Spleen (tissue), 13 donors: ENCODE measurements at regions of chr17 and their contacts with region 1.

Region 1: GRCh38 chr17:43940630-43941029 is 1.6 kb downstream of the PPY start:
- DNase-seq: no peak
- H3K4me3 ChIP-seq: no peak overlapping the region
- H3K27ac ChIP-seq: no peak overlapping the region
- H3K4me1 ChIP-seq: peaks cover 5 to 19% (median 11%) of the 10 kb centered on the region in 6 donors
- H3K27me3 ChIP-seq: peaks cover 0 to 34% (median 17%) of the 10 kb centered on the region in 7 donors
- CTCF ChIP-seq: peak in 8 of 11 experiments; percentile 8 to 47 (median 26)
- POLR2A ChIP-seq: no peak

Region 2: DNA sequence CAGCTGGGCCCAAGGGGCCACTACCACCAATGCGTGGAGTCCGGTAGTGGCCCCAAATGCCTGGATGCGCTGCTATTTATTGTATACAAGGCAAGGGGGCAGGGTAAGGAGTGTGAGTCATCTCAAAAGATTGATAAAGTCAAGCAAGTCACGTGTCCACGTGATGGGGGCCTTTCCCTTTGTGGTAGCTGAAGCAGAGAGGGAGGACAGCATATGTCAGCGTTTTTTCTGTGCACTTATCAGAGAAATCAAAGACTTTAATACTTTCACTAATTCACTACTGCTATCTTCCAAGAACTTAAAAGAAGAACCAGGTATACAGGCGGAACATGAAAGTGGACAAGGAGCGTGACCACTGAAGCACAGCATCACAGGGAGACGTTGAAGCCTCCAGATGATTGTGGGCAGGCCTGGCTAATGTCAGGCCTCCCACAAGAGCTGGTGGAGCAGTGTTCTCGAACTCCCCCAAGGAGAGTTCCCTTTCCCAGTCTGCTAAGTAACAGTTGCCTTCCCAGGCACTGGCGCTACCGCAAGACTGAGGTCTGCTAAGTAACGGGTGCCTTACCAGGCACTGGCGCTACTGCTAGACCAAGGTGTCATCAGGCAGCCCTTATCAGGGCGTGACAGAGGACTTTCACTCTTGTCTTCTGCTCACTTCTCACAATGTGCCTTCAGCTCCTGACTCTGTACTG is 219.0 kb after region 1 on chr17:
- intact Hi-C with region 1: loop called (anchors 10 kb)
- DNase-seq: no peak
- H3K4me3 ChIP-seq: no peak overlapping the region
- H3K27ac ChIP-seq: no peak overlapping the region
- H3K4me1 ChIP-seq: no peaks in the 10 kb centered on the region
- H3K27me3 ChIP-seq: no peaks in the 10 kb centered on the region
- CTCF ChIP-seq: no peak
- POLR2A ChIP-seq: no peak